GM12878 (cell line): ENCODE measurements at regions of chr7 and their contacts with region 1.

Region 1: DNA sequence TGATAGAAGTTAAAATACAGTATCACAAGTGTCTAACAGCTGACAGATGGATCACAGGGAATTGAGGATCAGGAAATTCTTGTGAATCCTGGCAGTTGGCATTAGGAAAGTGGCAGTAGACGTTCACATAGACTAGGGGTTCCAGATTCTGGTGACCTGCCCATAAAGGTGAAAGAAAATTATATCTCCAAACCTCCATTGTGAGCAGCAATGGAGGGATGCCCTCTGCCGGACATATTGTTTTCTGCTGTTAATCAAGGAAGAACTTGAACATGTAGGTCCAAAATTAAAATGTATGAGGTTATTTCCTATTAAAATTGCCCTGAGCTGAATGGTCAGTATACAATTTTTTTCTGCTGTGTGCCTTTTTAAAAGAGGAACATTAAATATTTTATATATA is 5.1 kb downstream of the NME8 start:
- DNase-seq: no peak
- ATAC-seq: peak; percentile 71
- H3K4me3 ChIP-seq: no peak overlapping the region
- H3K27ac ChIP-seq: no peak overlapping the region
- H3K4me1 ChIP-seq: no peaks in the 10 kb centered on the region
- H3K27me3 ChIP-seq: no peaks in the 10 kb centered on the region; a peak in 1 of 4 replicates
- CTCF ChIP-seq: peak; percentile 58 to 65 (median 62)
- EP300 ChIP-seq: no peak
- POLR2A ChIP-seq: no peak
- RAD21 ChIP-seq: peak; percentile 72

Region 2: DNA sequence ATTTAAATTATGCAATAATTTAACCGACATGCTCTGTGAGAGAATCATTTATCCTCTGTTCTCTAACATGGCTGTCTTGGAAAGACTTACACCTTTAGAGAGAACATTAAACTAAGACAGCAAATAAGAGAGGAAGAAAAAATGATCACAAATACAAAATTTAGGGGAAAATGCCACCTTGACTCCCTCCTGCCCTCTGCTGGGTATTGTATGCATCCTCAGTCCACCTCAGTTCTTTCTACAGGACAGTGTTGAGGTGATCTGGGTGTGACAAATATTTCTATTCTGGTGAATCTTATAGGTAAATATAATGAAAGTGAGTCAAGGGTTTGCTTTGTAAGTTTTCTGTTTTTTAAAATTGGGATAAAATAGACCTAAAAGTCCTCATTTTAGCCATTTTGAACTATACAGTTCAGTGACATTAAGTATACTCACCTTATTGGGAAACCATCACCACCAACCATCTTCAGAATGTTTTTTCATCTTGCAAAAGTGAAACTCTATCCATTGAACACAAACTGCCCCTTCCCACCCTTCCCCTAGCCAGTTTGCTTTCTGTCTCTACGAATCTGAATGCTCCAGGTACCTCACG is 343.3 kb before region 1 on chr7:
- CTCF ChIA-PET with region 1: no interaction called
- POLR2A ChIA-PET with region 1: no interaction called
- RAD21 ChIA-PET with region 1: no interaction called
- SMC1A ChIA-PET with region 1: interaction called, 3 read pairs
- in situ Hi-C with region 1: no loop called
- intact Hi-C with region 1: loop called (anchors 5 kb)
- DNase-seq: no peak
- ATAC-seq: peak; percentile 80
- H3K4me3 ChIP-seq: no peak overlapping the region
- H3K27ac ChIP-seq: no peak overlapping the region
- H3K4me1 ChIP-seq: no peaks in the 10 kb centered on the region
- H3K27me3 ChIP-seq: peaks cover 0 to 4% of the 10 kb centered on the region in 2 experiments; a peak in 2 of 4 replicates
- CTCF ChIP-seq: peak; percentile 59 to 77 (median 76)
- EP300 ChIP-seq: no peak
- POLR2A ChIP-seq: no peak
- RAD21 ChIP-seq: peak; percentile 71

Region 3: GRCh38 chr7:37633048-37633447 is 220.4 kb before region 1 on chr7:
- CTCF ChIA-PET with region 1: interaction called, 4 read pairs
- POLR2A ChIA-PET with region 1: no interaction called
- RAD21 ChIA-PET with region 1: no interaction called
- SMC1A ChIA-PET with region 1: no interaction called
- in situ Hi-C with region 1: no loop called
- intact Hi-C with region 1: loop called (anchors 5 kb)
- DNase-seq: no peak
- ATAC-seq: no peak
- H3K4me3 ChIP-seq: no peak overlapping the region
- H3K27ac ChIP-seq: no peak overlapping the region
- H3K4me1 ChIP-seq: no peaks in the 10 kb centered on the region
- H3K27me3 ChIP-seq: no peaks in the 10 kb centered on the region
- CTCF ChIP-seq: no peak
- EP300 ChIP-seq: no peak
- POLR2A ChIP-seq: no peak
- RAD21 ChIP-seq: no peak